Activated CD4-positive, alpha-beta T cell treated with anti-CD3 and anti-CD28 coated beads for 36 hours (primary cell): ENCODE measurements at regions of chr7 and their contacts with region 1.

Region 1: DNA sequence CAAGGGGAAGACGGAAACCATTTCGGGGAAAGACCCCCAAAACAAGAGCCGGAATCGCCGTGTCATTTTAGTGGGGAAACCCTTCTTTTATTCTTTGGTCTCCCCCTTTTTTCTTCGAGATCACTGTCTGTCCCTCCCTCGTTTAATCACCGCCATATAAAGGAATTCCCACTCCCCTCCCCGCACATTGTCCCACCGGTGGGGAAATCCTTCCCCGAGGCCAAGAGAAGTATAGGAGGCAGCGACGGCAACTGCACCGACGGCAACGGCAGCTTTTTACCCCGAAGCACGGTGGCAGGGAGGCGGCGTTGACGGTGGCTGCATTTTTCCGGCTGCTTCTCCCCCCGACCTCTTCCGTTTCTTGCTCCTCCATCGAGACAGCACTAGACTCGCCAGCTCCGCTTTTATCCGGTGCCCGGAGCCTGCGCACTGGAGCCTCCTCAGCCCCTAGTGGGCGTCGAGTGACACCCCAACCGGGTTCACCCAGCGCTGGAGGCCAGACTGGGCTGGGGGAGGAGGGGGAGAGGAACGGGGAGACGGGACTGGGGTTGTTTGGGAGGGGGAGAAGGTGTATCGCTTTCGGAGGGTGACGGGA is 687 bp upstream of the KMT2E start:
- DNase-seq: peak; percentile 97
- ATAC-seq: peak; percentile 63
- H3K4me3 Mint-ChIP-seq: peak overlapping the region; percentile 96
- H3K27ac Mint-ChIP-seq: peak overlapping the region; percentile 100
- H3K4me1 Mint-ChIP-seq: peaks cover 14% of the 10 kb centered on the region
- H3K27me3 Mint-ChIP-seq: no peaks in the 10 kb centered on the region

Region 2: GRCh38 chr7:104943502-104944343 is 69.6 kb before region 1 on chr7:
- CTCF ChIA-PET with region 1: interaction called, 8 read pairs
- POLR2A ChIA-PET with region 1: interaction called, 138 read pairs
- intact Hi-C with region 1: loop called (anchors 1 kb)
- DNase-seq: peak; percentile 87
- ATAC-seq: peak; percentile 68
- H3K4me3 Mint-ChIP-seq: peak overlapping the region; percentile 95
- H3K27ac Mint-ChIP-seq: peak overlapping the region; percentile 99
- H3K4me1 Mint-ChIP-seq: peaks cover 68% of the 10 kb centered on the region
- H3K27me3 Mint-ChIP-seq: no peaks in the 10 kb centered on the region

Region 3: DNA sequence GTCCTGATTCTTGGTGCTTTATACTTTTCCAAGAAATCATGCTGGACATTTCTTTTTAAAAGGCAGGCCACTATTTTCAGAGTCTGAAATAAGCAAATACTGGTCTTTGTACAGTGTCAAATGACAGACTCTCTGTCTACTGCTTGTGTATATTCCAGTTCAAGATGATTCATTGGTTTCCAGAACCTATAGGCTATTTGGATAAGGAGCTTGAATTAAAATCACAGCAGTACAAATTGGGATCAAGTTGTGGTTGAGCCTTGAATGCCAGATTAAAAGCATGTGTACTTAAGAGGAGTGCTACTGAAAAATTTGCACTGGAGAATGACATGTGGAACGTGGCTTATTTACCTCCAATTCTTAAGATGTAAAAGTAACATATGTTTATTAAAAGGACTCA is 11.4 kb after region 1 on chr7:
- CTCF ChIA-PET with region 1: interaction called, 30 read pairs
- POLR2A ChIA-PET with region 1: interaction called, 12 read pairs
- intact Hi-C with region 1: loop called in 1 of 2 experiments (anchors 2 kb)
- DNase-seq: no peak
- ATAC-seq: peak; percentile 17
- H3K4me3 Mint-ChIP-seq: no peak overlapping the region
- H3K27ac Mint-ChIP-seq: peak overlapping the region; percentile 60
- H3K4me1 Mint-ChIP-seq: peaks cover 91% of the 10 kb centered on the region
- H3K27me3 Mint-ChIP-seq: no peaks in the 10 kb centered on the region

Region 4: DNA sequence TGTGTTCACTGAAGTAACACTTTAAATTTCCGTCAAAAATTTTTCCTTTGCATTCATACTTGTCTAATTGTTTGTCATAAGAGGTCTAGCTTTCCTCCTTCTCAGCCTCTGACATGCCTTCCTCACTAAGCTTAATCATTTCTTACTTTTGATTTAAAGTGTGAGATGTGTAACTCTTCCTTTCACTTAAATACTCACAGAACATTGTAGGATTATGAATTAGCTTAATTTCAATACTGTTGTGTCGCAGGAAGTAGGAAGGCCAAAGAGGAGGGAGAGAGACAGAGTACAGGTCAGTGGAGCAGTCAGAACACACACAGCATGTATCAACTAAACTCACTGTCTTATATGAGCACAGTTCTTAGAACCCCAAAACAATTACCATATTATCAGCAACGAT is 276.4 kb after region 1 on chr7:
- CTCF ChIA-PET with region 1: no interaction called
- POLR2A ChIA-PET with region 1: no interaction called
- intact Hi-C with region 1: no loop called
- DNase-seq: peak; percentile 30
- ATAC-seq: peak; percentile 95
- H3K4me3 Mint-ChIP-seq: peak overlapping the region; percentile 6
- H3K27ac Mint-ChIP-seq: peak overlapping the region; percentile 73
- H3K4me1 Mint-ChIP-seq: peaks cover 25% of the 10 kb centered on the region
- H3K27me3 Mint-ChIP-seq: no peaks in the 10 kb centered on the region

Region 5: DNA sequence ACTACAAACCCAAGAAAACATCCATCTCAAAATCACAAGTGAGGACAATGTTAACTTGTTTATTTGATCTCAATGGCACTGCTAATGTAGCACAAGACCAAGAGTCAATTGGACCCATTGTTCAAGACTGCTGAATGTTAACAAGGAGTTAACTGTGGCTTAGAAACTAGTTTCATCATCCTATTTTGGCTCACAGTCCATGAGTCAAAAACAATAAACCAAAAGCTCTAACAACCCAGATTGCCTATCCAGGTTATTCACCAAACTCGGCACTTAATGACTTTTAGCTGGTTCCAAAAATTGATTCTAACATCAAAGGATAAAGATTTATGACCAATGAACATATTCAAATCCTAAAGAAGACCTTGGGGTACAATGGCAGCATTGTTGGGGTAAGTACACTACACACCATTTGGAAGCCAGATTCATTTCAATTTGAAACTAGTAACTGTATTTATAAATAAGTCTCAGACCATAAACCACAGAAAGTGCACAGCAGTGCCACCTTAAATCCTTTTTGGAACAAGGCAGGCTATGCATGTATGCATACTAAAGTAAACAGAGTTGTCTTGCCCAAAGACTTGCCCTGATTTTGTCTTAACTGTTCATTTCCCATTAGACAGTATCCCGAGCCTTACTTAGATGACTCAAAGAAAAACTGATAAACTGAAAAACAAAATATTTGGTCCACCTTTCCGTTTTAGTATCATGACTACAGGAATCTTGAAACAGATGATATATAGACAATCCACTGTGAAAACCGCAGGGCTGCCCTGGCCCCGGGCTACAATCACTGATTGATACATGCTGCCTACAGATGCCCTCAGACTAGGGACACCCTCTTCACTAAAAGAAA is 290.9 kb after region 1 on chr7:
- CTCF ChIA-PET with region 1: no interaction called
- POLR2A ChIA-PET with region 1: no interaction called
- intact Hi-C with region 1: loop called (anchors 5 to 10 kb)
- DNase-seq: peak; percentile 37
- ATAC-seq: peak; percentile 31
- H3K4me3 Mint-ChIP-seq: no peak overlapping the region
- H3K27ac Mint-ChIP-seq: peak overlapping the region; percentile 40
- H3K4me1 Mint-ChIP-seq: peaks cover 70% of the 10 kb centered on the region
- H3K27me3 Mint-ChIP-seq: no peaks in the 10 kb centered on the region

Region 6: GRCh38 chr7:105678811-105679495 is 665.6 kb after region 1 on chr7:
- CTCF ChIA-PET with region 1: no interaction called
- POLR2A ChIA-PET with region 1: no interaction called
- intact Hi-C with region 1: loop called in 1 of 2 experiments (anchors 5 kb)
- DNase-seq: peak; percentile 62
- ATAC-seq: peak; percentile 21
- H3K4me3 Mint-ChIP-seq: peak overlapping the region; percentile 83
- H3K27ac Mint-ChIP-seq: peak overlapping the region; percentile 93
- H3K4me1 Mint-ChIP-seq: peaks cover 63% of the 10 kb centered on the region
- H3K27me3 Mint-ChIP-seq: no peaks in the 10 kb centered on the region

Region 7: DNA sequence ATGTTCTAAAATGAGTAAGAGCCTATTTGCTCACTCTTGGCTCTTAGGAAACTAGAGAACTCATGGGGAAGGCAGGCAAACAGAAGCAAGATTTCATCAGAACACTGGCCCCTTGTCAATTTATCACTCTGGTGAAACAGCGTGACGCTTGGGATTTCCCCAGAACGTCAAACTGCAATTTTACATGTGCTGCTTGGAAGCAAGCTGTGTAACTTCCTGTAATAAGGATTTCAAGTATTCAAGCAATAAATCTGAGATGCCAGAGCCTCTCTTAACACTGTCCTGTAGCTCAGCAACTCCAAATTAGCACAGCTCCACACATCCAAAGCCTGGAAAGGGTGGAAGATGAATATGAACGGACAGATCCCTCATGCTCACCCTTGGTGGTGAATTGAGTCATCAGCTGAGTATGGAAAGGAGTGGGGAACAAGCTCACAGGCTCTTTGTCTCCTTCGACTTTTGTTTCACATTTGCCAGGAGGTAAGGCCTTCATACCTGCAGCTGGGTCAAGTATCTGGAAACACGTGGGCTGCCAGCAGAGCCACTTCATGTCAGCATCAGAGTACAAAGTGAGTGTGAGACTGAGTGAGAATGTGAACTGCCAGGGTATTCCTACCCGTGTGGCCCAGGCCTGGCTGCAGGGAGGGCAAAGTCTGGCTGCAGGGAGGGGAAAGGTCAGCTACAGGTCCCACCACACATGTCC is 1411.8 kb after region 1 on chr7:
- CTCF ChIA-PET with region 1: no interaction called
- POLR2A ChIA-PET with region 1: no interaction called
- intact Hi-C with region 1: loop called (anchors 10 kb)
- DNase-seq: peak; percentile 89
- ATAC-seq: peak; percentile 79
- H3K4me3 Mint-ChIP-seq: peak overlapping the region; percentile 70
- H3K27ac Mint-ChIP-seq: peak overlapping the region; percentile 99
- H3K4me1 Mint-ChIP-seq: peaks cover 88% of the 10 kb centered on the region
- H3K27me3 Mint-ChIP-seq: peaks cover 2% of the 10 kb centered on the region